Mammary epithelial cell (primary cell): ENCODE measurements at regions of chr11 and their contacts with region 1.

Region 1: DNA sequence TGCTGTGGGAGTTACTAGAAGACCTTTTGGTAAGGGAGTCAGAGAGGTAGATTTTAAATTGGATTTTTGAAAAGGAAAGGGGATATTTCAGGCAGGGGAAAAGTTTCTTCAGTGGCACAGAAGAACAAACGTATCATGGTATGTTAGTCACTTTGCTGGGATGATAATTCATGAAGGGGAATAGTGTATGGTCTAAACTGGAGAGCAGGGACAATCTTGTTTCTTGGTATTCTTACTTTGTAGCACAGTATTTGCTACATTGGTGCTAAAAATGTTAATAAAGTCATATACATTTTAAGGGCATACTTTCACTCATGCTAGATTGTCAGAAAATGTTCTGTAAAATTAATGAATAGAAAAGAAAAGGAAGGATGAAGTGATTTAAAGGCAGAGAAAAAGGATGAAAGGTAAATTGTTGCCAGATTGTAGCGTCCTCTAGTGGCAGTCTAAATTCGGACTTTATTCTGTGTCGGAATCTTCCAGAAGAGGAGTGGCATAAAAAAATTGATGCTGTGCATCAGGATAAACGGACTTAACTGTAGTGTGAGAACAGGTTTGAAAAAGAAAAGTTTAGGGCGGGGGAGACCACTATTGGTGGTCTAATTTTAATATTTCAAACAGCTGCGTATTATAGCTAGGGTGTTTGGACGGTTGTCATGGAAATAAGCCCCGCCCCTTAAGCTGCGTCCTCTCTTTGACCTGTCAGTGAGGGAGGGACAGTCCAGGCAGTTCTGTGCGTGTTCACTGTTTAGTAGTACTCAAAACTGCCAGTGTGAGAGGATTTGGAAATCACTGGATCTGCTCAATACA is at the start of gene BCO2:
- DNase-seq: peak; percentile 85
- H3K4me3 ChIP-seq: peak within 1 kb of the TSS; percentile 26 to 56 (median 47)
- H3K27ac ChIP-seq: peak within 1 kb of the TSS; percentile 88
- H3K4me1 ChIP-seq: peaks cover 10% of the 10 kb centered on the region
- H3K27me3 ChIP-seq: no peaks in the 10 kb centered on the region
- CTCF ChIP-seq: peak; percentile 91 to 97
- total RNA-seq, gene BCO2: 3.8 to 4.9 TPM

Region 2: GRCh38 chr11:112086422-112087191 is 88.4 kb before region 1 on chr11 and contains the starts of genes SDHD and TIMM8B:
- CTCF ChIA-PET with region 1: no interaction called
- dilution Hi-C with region 1: no loop called
- in situ Hi-C with region 1: no loop called
- intact Hi-C with region 1: loop called (anchors 1 kb)
- DNase-seq: peak; percentile 95
- H3K4me3 ChIP-seq: peak within 1 kb of the TSS; percentile 93 to 98 (median 93)
- H3K27ac ChIP-seq: peak within 1 kb of the TSS; percentile 80
- H3K4me1 ChIP-seq: peaks cover 10% of the 10 kb centered on the region
- H3K27me3 ChIP-seq: no peaks in the 10 kb centered on the region
- CTCF ChIP-seq: peak in 1 of 2 donors; percentile 46
- total RNA-seq, gene SDHD: 57.7 to 58.5 TPM
- total RNA-seq, gene TIMM8B: 21.8 to 58.7 TPM

Region 3: GRCh38 chr11:112121981-112122615 is 52.9 kb before region 1 on chr11:
- CTCF ChIA-PET with region 1: no interaction called
- dilution Hi-C with region 1: no loop called
- in situ Hi-C with region 1: loop called in 1 of 2 experiments (anchors 10 kb)
- intact Hi-C with region 1: loop called (anchors 2 kb)
- DNase-seq: peak; percentile 83
- H3K4me3 ChIP-seq: no peak overlapping the region
- H3K27ac ChIP-seq: peak overlapping the region; percentile 97
- H3K4me1 ChIP-seq: peaks cover 30% of the 10 kb centered on the region
- H3K27me3 ChIP-seq: no peaks in the 10 kb centered on the region
- CTCF ChIP-seq: no peak

Region 4: DNA sequence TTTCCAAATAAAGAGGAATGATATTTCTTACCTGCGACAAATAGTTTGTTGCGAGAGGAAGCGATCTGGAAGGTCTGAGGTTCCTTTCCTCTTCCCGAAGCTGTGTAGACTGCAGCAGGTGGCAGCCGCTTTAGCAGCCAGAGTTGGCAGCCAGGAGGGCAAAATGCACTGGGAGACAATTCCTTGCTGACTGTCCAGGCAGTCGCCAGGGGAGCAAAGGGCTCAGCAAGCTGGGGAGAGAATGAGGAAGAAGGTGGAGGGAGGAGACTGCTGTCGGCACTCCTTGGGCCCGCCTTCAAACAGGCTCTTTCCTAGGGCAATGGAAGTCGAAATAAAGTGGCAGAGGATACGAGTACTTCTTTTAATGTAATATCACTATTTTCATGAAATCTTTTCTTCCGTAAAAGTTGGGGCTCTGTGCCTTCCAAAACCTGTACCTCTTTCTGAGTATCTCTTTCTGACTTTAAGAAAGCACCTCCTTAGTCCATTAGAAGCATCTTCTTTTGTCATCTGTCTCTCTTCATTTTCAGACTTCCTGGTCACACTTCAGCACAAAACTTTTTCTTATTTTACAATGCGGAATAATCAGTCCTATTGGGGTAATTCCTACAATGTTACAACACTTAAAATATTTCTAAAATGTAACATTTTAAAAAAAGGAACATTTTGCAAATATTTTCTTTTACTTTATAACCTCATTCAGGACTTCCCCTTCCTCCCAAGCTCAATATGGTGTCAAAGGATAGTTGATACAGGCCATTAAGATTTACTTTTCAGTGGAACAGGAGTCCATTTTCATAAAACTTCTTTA is 10.9 kb before region 1 on chr11 and contains the start of gene IL18:
- CTCF ChIA-PET with region 1: no interaction called
- dilution Hi-C with region 1: no loop called
- in situ Hi-C with region 1: no loop called
- intact Hi-C with region 1: loop called (anchors 1 kb)
- DNase-seq: no peak
- H3K4me3 ChIP-seq: peak within 1 kb of the TSS in 2 of 3 experiments; percentile 14 to 15
- H3K27ac ChIP-seq: peak within 1 kb of the TSS; percentile 97
- H3K4me1 ChIP-seq: peaks cover 51% of the 10 kb centered on the region
- H3K27me3 ChIP-seq: no peaks in the 10 kb centered on the region
- CTCF ChIP-seq: no peak
- total RNA-seq, gene IL18: 1.3 to 2.2 TPM

Region 5: GRCh38 chr11:112265721-112266409 is 90.9 kb after region 1 on chr11:
- CTCF ChIA-PET with region 1: no interaction called
- dilution Hi-C with region 1: no loop called
- in situ Hi-C with region 1: no loop called
- intact Hi-C with region 1: no loop called
- DNase-seq: peak; percentile 25
- H3K4me3 ChIP-seq: no peak overlapping the region
- H3K27ac ChIP-seq: no peak overlapping the region
- H3K4me1 ChIP-seq: no peaks in the 10 kb centered on the region
- H3K27me3 ChIP-seq: no peaks in the 10 kb centered on the region
- CTCF ChIP-seq: no peak